Right ventricle myocardium superior (tissue), 1 donor: ENCODE measurements at regions of chr6 and their contacts with region 1.

Region 1: DNA sequence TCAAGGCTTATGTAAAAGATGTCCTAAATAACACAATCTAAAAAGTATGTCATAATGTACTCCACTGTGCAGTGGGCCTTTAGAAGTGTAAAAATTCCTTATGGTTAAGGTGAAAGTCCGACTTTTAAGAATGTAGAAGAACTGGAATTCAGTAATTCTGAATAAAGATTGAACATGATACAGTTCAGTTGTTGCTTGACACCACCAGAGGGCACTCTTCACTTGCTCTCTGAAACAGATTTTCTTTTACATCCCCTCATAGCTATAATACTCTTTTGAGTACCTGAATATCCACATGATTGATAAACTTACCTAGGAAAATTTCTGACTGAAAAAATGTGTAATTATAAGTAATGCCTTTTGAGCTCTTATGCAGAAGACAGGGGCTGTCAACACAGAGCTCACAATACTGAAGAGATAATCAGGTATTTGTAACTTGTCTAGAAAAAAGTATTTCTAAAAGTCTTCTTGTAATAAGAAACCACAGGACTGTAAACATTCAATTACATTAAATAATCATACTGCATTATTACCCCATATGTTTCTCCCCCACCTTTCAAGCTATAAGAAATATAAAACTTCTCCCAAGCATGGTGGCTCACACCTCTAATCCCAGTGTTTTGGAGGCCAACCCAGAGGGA is 92.1 kb downstream of the POPDC3 start:
- DNase-seq: no peak
- ATAC-seq: peak; percentile 71

Region 2: GRCh38 chr6:105363100-105363754 is 275.5 kb after region 1 on chr6:
- intact Hi-C with region 1: loop called (anchors 5 kb)
- DNase-seq: no peak
- ATAC-seq: no peak

Region 3: DNA sequence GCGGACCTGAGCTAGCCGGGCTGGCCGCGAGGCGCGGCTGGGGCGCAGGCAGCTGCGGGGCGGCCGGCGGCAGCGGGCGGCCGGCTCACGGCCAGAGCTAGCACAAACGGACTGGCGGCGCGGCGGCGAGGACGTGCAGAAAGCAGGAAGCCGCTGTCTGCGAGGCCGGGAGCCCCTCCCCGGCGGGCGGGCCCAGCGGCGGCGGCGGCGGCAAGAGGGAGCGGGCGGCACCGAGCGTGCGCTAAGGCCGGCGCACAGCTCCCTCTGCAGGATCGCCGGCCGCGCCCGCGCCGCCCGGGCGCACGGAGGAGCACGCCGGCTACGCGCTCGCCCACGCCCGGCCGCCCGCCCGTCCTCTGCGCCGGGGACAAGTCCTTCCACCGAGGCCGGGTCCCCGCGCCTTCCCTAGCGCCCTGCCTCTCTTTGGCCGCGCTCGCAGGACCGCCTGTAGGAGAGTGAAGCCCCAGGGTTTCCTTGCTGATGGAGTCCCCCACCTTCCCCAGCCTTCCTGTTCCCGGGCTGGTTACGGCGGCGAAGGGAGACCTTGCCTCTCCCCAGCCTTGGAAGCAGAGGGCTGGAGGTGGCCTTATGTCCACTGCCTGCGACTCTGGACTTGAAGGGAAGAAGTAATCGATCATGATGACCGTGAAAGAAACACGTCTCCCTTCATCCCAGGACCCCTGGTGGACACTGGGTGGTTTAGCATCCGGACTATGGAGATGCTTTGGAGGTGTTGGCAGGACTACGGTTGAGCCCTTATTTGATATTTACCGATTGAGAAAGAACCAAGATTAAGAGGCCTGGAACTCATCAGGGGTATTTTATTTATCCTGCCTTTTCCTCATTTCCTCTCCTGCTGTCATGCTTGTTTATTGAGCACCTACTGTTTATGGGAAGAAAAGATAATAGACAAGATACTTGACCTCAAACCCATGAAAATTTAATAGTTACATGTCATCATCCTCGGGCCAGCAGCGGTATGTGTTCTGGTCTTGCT is 315.5 kb after region 1 on chr6 and contains the start of gene PREP:
- intact Hi-C with region 1: loop called (anchors 2 kb)
- DNase-seq: peak; percentile 93
- ATAC-seq: peak; percentile 99
- total RNA-seq, gene PREP: 23.0 TPM

Region 4: GRCh38 chr6:105424175-105424783 is 336.6 kb after region 1 on chr6:
- intact Hi-C with region 1: loop called (anchors 2 kb)
- DNase-seq: no peak
- ATAC-seq: peak; percentile 70